Dorsolateral prefrontal cortex (tissue), 120 donors: ENCODE measurements at regions of chr1 and their contacts with region 1.

Region 1: GRCh38 chr1:244047621-244048471 is 3.2 kb upstream of the ZBTB18 start:
- DNase-seq: peak; percentile 54 to 100 (median 98)
- H3K4me3 ChIP-seq: peak overlapping the region; percentile 60 to 99 (median 91)
- H3K27ac ChIP-seq: peak overlapping the region; percentile 88 to 100 (median 99)
- H3K27me3 ChIP-seq: no peaks in the 10 kb centered on the region
- CTCF ChIP-seq: peak in 25 of 56 donors; percentile 4 to 39 (median 23)

Region 2: DNA sequence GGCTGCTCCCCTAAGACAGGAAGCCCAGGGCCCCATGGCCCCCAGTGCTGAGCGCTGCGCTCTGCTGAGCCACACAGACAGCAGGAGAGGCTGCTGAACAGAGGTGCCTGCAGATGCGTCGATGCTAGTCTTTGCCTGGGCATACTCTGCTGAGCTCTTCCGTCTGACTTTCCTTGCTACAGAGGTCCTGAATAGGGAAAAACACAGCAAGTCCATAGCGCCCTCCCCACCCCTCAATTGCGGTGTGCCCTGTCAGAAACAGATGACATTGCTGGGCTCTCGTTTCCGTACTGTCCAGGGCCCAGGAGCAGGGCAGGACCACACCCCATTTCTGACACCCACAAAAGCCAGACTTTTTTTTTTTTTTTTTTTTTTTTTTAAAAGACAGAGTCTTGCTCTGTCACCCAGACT is 539.5 kb before region 1 on chr1:
- intact Hi-C with region 1: loop called in 1 of 2 experiments (anchors 10 kb)
- DNase-seq: no peak
- H3K4me3 ChIP-seq: peak overlapping the region in 21 of 59 donors; percentile 0 to 50 (median 23)
- H3K27ac ChIP-seq: peak overlapping the region; percentile 66 to 96 (median 89)
- H3K27me3 ChIP-seq: no peaks in the 10 kb centered on the region
- CTCF ChIP-seq: no peak

Region 3: GRCh38 chr1:243850452-243851256 is 197.2 kb before region 1 on chr1:
- intact Hi-C with region 1: loop called (anchors 2 kb)
- DNase-seq: peak; percentile 63 to 84 (median 78)
- H3K4me3 ChIP-seq: peak overlapping the region; percentile 59 to 92 (median 81)
- H3K27ac ChIP-seq: peak overlapping the region; percentile 72 to 100 (median 97)
- H3K27me3 ChIP-seq: no peaks in the 10 kb centered on the region
- CTCF ChIP-seq: peak in 4 of 56 donors; percentile 3 to 20 (median 8)

Region 4: DNA sequence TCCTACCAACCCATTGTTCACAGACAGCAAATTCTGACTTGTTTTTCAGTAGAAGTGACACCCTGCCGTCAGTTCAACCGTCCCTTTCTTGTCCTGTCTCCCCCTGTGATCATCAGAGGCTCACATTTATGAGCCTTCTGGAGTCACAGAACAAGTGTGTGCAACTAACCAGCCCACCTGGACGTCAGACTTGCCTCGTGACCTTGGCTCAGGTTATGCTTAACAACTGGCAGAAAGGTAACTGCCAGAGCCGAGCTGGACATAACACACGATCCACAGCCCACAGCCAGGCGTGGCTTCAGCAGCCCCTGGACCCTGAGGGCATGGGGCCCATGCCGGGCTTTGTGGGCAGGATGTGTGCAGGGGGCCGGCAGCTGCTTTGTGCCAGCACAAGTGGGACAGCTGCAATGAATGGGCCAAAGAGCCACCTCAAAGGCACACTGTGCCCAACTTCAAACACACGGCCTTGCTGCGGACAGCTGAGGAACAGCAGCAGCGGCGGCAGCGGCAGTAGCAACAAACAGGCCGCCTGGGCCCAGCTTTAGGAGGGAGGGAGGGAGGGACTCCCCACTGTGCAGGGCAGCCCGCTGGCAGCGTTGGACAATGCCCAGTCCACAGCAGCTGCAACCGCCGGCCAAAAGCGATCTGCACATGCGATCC is 107.2 kb after region 1 on chr1:
- intact Hi-C with region 1: loop called in 1 of 2 experiments (anchors 5 kb)
- DNase-seq: peak; percentile 31 to 83 (median 74)
- H3K4me3 ChIP-seq: peak overlapping the region in 42 of 59 donors; percentile 0 to 56 (median 26)
- H3K27ac ChIP-seq: peak overlapping the region in 15 of 59 donors; percentile 4 to 65 (median 25)
- H3K27me3 ChIP-seq: no peaks in the 10 kb centered on the region
- CTCF ChIP-seq: peak in 13 of 56 donors; percentile 8 to 49 (median 18)